PC-3 (cell line): ENCODE measurements at regions of chr18 and their contacts with region 1.

Region 1: DNA sequence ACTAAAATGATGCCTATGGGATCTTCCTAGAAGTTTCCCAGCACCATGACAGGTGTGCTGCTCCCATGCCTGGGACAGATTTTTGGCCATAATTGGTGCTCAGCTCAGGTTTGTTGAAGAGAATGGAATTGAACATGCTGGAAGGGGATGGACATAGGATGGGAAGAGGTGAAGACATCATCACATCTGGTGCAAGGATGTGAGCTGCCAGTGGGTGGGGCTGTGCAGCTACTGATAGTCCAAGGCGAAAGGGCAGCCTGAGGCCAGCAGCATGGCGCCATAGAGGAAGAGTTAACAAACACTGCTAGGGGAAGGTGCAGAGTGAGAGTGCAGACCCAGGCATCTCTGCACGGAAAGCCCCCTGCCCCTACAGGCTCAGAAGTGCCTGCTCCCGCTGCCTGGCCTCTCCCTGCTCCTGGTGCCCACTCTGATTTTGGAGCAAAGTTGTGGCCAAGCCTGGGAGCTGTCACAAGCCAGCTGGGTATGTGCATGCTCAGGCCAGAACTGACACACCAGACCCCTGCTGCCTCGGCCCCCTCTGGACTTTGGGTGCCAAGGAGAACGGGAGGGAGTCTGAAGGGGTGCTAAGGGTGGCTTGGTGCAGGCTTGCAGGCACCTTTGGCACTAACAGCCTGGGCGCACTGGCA is 178.6 kb downstream of the ZBTB7C start:
- DNase-seq: peak; percentile 48
- ATAC-seq: peak; percentile 68
- H3K4me3 ChIP-seq: no peak overlapping the region
- H3K27ac ChIP-seq: no peak overlapping the region
- H3K4me1 ChIP-seq: peaks cover 13% of the 10 kb centered on the region
- H3K27me3 ChIP-seq: no peaks in the 10 kb centered on the region
- CTCF ChIP-seq: peak; percentile 61; the same call in 1 of the 2 replicates

Region 2: GRCh38 chr18:48295585-48296311 is 65.2 kb after region 1 on chr18:
- CTCF ChIA-PET with region 1: no interaction called
- POLR2A ChIA-PET with region 1: no interaction called
- intact Hi-C with region 1: no loop called
- DNase-seq: no peak
- ATAC-seq: no peak
- H3K4me3 ChIP-seq: no peak overlapping the region
- H3K27ac ChIP-seq: no peak overlapping the region
- H3K4me1 ChIP-seq: peaks cover 27% of the 10 kb centered on the region
- H3K27me3 ChIP-seq: no peaks in the 10 kb centered on the region
- CTCF ChIP-seq: no peak; the same call in 1 of the 2 replicates

Region 3: DNA sequence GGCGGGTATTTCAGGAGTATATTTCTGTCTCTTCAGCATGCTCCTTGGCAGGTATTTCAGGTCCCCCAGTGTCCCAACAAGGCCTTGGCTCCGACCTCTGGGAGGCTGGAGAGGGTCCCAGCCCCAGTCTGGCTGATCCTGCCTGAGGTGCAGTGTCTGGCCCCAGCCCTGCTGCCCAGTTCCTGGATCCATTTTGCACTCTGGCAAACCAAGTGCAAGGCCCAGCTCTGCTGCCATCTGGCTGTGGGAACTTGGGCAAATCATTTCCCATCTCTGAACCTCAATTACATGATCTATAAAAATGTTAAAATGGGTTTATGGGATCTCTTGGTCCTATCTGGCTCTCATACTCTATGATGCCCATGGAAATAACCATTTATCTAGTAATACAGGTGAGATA is 115.0 kb after region 1 on chr18:
- CTCF ChIA-PET with region 1: no interaction called
- POLR2A ChIA-PET with region 1: no interaction called
- intact Hi-C with region 1: loop called (anchors 1 kb)
- DNase-seq: peak; percentile 26
- ATAC-seq: peak; percentile 48
- H3K4me3 ChIP-seq: no peak overlapping the region
- H3K27ac ChIP-seq: no peak overlapping the region
- H3K4me1 ChIP-seq: no peaks in the 10 kb centered on the region
- H3K27me3 ChIP-seq: no peaks in the 10 kb centered on the region
- CTCF ChIP-seq: peak; percentile 50; the same call in 1 of the 2 replicates

Region 4: DNA sequence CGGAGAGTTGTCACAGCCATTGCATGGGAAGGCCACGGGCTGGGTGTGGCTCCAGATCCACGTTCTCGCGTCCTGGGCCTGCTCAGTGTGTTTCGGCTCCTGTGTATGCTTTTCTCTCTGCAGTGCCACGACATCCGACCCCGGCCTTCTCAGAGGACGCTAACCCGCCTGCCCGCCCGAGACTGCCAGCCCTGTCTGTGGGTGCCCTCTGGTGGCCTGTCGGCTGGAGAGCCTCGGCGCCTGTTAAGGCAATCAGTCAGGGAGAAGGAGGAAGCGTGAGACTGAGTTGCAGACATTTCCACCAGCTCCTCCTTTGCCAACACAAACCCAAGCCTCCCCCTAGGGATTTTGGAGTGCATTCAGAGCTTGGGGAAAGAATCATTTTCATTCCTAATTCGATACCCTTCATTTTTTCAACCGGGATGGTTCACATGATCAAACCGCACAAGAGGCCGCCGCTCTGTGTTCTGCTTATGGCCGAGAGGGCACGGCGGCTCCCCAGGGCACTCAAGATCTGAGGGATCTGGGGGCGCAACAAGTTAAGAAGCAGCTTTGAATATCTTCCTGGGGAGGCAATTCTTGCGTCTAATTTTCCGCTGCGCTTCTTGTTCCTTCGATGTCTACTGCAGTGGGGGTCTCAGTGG is 216.1 kb after region 1 on chr18:
- CTCF ChIA-PET with region 1: no interaction called
- POLR2A ChIA-PET with region 1: no interaction called
- intact Hi-C with region 1: loop called (anchors 1 kb)
- DNase-seq: peak; percentile 52
- ATAC-seq: peak; percentile 94
- H3K4me3 ChIP-seq: no peak overlapping the region
- H3K27ac ChIP-seq: no peak overlapping the region
- H3K4me1 ChIP-seq: no peaks in the 10 kb centered on the region
- H3K27me3 ChIP-seq: no peaks in the 10 kb centered on the region
- CTCF ChIP-seq: peak; percentile 71